Esophagus squamous epithelium (tissue), 5 donors: ENCODE measurements at regions of chr16 and their contacts with region 1.

Region 1: DNA sequence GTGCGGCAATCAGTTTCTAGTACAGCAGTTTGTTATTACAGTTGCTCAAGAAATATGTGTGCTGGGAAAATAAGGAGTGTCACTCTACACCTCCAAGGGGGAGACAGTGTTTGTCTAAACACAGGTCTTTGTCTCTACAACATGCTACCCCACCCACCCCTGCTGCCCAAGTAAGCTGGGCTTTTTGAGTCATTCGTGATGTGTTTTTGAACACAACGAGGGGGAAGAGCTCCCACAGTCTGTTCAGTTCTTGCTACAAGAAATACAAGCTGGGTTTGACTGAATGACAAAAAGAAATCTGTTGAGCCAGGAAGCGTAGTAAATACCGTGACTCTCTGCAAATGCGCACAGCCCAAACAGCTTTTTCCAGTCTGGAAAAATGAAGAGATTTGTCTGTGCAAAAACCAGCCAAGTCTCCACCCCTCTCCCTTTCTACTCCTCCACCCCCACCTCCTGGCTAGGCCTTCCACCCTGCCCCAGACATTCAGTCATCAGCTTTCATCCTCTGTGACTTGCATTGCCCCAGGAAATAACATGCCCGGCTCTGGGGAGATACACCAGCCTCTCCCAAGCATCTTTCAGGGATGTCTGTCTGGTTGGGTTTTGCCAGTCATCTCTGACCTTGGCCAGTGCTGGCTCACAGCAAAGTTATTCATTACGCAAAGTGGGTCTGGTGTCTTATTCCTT is 25.7 kb downstream of the CHD9 start:
- DNase-seq: no peak
- H3K4me3 ChIP-seq: no peak overlapping the region
- H3K27ac ChIP-seq: peak overlapping the region; percentile 81 to 87 (median 86)
- H3K4me1 ChIP-seq: peaks cover 40 to 73% (median 52%) of the 10 kb centered on the region in 3 donors
- H3K27me3 ChIP-seq: no peaks in the 10 kb centered on the region
- CTCF ChIP-seq: no peak
- POLR2A ChIP-seq: no peak

Region 2: DNA sequence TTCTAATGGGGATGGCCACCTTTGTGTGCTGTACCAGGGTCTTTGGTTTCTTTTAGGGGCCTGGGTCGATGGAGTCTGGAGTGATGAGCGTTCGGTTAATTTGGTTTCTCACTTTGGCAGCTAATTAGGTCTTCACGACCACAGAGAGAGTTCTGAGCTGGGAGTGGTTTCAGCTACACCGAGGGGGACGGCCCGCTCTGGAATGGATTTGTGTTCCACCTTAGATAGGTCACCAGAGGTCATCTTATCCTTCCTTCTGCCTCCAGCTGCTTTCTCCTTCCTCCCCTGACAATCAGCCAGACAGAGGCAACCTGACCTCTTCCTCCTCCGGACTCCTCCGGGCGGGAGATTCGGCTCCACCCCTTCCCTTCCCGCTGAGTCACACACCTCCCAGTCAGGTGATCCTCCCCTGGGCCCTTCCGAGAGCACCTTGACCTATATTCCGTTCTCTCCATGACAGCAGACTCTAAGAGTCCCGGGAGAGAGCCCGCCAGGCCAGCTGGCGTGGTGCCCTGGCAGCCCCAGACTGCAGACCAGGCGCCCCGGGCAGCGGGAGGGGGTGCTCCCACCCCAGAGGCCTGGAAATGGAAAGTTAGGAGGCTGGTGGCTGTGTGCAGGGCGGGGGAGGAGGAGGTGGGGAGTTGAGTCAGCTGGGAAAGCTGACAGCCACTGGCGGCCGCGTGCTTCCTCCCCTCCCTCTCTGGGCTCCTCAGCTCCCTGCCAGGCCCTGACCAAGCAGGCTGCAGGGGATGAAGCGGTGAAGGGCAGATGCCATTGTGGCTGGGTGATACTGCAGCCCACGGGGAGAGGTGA is 19.0 kb after region 1 on chr16:
- intact Hi-C with region 1: loop called (anchors 2 kb)
- DNase-seq: peak; percentile 55
- H3K4me3 ChIP-seq: peak overlapping the region; percentile 40 to 65 (median 50)
- H3K27ac ChIP-seq: peak overlapping the region; percentile 92 to 96 (median 96)
- H3K4me1 ChIP-seq: peaks cover 31 to 72% (median 41%) of the 10 kb centered on the region in 3 donors
- H3K27me3 ChIP-seq: no peaks in the 10 kb centered on the region
- CTCF ChIP-seq: no peak
- POLR2A ChIP-seq: no peak

Region 3: GRCh38 chr16:53183442-53183841 is 103.0 kb after region 1 on chr16:
- intact Hi-C with region 1: no loop called
- DNase-seq: no peak
- H3K4me3 ChIP-seq: no peak overlapping the region
- H3K27ac ChIP-seq: no peak overlapping the region
- H3K4me1 ChIP-seq: no peaks in the 10 kb centered on the region
- H3K27me3 ChIP-seq: no peaks in the 10 kb centered on the region
- CTCF ChIP-seq: no peak
- POLR2A ChIP-seq: no peak